Right cardiac atrium (tissue), 5 donors: ENCODE measurements at regions of chr6 and their contacts with region 1.

Region 1: DNA sequence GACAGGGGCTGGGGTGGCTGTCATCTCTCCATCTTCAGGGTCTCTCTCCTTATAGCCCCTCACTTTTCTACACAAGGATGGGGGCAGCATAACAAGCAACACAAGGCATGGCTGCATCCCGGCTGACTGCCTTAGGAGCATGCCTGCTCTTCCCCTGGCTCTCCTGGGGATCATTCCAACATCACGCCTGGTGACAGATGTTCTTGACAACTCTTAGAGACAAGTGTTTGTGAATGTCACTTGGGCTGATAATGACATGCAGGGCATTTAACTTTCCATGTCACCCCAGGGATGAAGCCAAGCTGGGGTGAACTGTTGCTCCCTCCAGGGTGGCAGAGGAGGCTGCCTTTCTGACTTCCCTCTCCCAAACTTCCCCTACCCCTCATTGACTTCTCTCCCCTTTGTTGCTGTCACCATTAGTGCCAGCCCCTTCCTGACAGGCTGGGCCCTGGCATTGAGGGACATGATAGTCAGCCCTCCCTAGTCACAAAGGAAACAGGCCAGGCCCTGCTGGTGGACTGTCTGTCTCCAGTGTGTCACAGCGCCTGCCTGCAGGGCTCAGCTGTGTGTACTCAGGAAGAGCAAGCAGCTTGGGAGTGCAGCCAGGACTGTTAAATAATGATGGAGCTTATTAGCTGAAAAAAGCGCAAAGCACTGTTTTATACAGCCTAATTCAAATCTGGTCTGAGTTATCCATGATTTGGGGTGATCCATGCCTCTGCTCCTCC is 161.8 kb downstream of the LRFN2 start:
- DNase-seq: peak; percentile 26 to 73 (median 68)
- ATAC-seq: peak; percentile 86 to 92
- H3K4me3 ChIP-seq: no peak overlapping the region
- H3K27ac ChIP-seq: peak overlapping the region; percentile 63
- H3K4me1 ChIP-seq: peaks cover 3% of the 10 kb centered on the region
- H3K27me3 ChIP-seq: no peaks in the 10 kb centered on the region

Region 2: DNA sequence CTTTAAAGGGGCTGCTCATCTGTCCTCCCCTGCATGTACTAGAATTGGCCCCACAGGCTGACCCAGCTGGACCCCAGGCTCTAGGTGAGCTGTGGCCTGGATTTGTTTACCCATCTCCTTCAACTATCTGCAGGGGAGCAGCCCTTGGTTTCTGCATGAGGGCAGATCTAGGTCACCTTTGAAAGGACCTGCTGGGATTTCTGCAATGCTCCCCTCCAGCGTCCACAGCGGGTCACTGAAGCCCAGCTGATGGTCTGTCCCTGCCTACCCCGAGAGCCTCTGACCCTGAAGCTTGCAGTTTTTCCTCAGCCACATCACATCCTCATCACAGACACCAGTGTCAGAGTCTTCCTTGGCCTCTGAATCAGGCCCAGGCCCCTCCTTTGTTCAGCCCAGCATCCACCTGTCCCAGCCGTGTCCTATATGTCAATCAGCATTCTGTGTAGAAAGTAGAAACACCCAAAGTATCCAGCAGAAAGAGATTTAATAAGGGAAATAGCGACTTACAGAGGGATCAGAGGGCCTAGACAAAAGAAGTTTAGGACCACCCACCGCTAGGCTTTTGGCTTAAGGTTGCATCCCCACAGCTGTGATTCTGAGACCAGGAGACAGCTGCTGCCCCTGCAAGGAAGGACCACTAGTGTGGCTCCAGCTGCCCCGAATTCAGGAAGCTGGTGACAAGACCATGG is 81.3 kb before region 1 on chr6:
- intact Hi-C with region 1: no loop called
- DNase-seq: no peak
- ATAC-seq: no peak
- H3K4me3 ChIP-seq: no peak overlapping the region
- H3K27ac ChIP-seq: no peak overlapping the region
- H3K4me1 ChIP-seq: no peaks in the 10 kb centered on the region
- H3K27me3 ChIP-seq: no peaks in the 10 kb centered on the region

Region 3: GRCh38 chr6:40509716-40510250 is 84.4 kb after region 1 on chr6:
- intact Hi-C with region 1: loop called in 1 of 4 experiments (anchors 10 kb)
- DNase-seq: no peak
- ATAC-seq: no peak
- H3K4me3 ChIP-seq: no peak overlapping the region
- H3K27ac ChIP-seq: no peak overlapping the region
- H3K4me1 ChIP-seq: no peaks in the 10 kb centered on the region
- H3K27me3 ChIP-seq: no peaks in the 10 kb centered on the region